Colonic mucosa (tissue), 4 donors: ENCODE measurements at regions of chr1 and their contacts with region 1.

Region 1: DNA sequence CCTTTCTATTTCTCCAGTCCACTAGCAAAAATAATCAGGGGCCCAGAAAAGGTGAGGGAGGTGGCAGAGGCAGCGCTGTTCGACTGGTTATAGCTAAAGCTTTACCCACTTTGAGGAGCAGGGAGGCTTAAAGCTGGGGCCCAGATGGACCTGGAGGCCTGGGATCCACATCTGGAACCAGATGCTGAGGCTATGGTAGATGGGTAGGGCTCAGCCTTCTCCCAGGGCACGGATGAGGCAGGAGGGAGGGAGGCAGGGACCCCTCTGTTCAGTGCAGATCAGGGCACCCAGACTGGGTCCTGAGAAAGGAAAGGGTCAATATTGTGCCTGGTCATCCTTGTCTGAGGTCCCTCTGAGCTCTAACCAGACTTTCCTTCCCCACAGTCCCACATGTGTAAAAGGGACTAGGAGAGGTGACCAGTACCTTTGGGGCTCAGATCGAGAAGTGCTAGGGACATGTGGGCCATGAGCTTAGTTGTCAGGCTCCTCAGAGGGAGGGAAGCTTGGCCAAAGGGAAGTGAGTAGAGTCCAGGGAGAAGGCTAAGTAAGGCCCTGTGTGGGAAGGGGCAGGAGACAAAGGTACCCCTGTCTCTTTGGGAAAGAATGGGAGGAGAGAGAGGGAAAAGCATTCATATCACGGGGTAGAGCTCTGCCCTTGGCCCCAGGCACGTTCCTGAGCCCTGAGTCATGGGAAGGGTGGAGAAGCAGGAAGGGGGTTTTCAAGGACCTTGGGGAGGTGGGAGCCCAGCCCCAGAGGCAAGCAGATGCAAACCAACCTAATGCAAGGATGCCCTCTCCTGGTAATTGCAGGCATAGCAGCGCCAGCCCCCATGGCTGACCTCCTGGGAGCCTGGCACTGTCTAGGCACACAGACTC is 15.4 kb downstream of the LMNA start:
- DNase-seq: peak; percentile 90
- H3K4me3 ChIP-seq: no peak overlapping the region
- H3K27ac ChIP-seq: peak overlapping the region; percentile 94
- H3K4me1 ChIP-seq: peaks cover 39% of the 10 kb centered on the region
- H3K27me3 ChIP-seq: no peaks in the 10 kb centered on the region
- CTCF ChIP-seq: peak; percentile 91

Region 2: DNA sequence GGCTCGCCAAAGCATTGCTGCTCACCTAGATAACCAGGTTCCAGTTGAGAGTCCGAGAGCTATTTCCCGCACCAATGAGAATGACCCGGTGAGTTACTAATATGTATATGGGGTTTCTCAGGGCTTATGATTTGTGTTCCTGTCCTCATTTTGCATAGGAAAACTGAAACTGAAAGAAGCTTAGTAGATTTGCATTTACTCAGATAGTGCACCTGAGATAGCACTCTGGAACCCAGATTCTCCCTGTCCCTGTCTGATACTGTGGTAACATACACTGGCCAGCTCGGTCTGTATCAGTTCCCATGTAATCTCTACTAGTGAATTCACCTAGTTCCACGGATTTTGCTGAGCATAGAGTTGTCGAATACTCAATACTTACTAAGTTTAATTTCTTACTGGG is 412.9 kb before region 1 on chr1:
- intact Hi-C with region 1: no loop called
- DNase-seq: no peak
- H3K4me3 ChIP-seq: no peak overlapping the region
- H3K27ac ChIP-seq: no peak overlapping the region
- H3K4me1 ChIP-seq: no peaks in the 10 kb centered on the region
- H3K27me3 ChIP-seq: no peaks in the 10 kb centered on the region
- CTCF ChIP-seq: no peak

Region 3: GRCh38 chr1:156096640-156097391 is 33.1 kb before region 1 on chr1:
- intact Hi-C with region 1: loop called (anchors 2 kb)
- DNase-seq: peak; percentile 95
- H3K4me3 ChIP-seq: no peak overlapping the region
- H3K27ac ChIP-seq: peak overlapping the region; percentile 48
- H3K4me1 ChIP-seq: peaks cover 8% of the 10 kb centered on the region
- H3K27me3 ChIP-seq: no peaks in the 10 kb centered on the region
- CTCF ChIP-seq: peak; percentile 89

Region 4: GRCh38 chr1:156435545-156436141 is 305.7 kb after region 1 on chr1:
- intact Hi-C with region 1: no loop called
- DNase-seq: no peak
- H3K4me3 ChIP-seq: peak overlapping the region; percentile 31
- H3K27ac ChIP-seq: no peak overlapping the region
- H3K4me1 ChIP-seq: no peaks in the 10 kb centered on the region
- H3K27me3 ChIP-seq: peaks cover 96% of the 10 kb centered on the region
- CTCF ChIP-seq: no peak

Region 5: GRCh38 chr1:157671895-157672294 is 1542.0 kb after region 1 on chr1:
- intact Hi-C with region 1: no loop called
- DNase-seq: no peak
- H3K4me3 ChIP-seq: no peak overlapping the region
- H3K27ac ChIP-seq: no peak overlapping the region
- H3K4me1 ChIP-seq: no peaks in the 10 kb centered on the region
- H3K27me3 ChIP-seq: no peaks in the 10 kb centered on the region
- CTCF ChIP-seq: no peak